Naive thymus-derived CD4-positive, alpha-beta T cell (primary cell): ENCODE measurements at regions of chr17 and their contacts with region 1.

Region 1: DNA sequence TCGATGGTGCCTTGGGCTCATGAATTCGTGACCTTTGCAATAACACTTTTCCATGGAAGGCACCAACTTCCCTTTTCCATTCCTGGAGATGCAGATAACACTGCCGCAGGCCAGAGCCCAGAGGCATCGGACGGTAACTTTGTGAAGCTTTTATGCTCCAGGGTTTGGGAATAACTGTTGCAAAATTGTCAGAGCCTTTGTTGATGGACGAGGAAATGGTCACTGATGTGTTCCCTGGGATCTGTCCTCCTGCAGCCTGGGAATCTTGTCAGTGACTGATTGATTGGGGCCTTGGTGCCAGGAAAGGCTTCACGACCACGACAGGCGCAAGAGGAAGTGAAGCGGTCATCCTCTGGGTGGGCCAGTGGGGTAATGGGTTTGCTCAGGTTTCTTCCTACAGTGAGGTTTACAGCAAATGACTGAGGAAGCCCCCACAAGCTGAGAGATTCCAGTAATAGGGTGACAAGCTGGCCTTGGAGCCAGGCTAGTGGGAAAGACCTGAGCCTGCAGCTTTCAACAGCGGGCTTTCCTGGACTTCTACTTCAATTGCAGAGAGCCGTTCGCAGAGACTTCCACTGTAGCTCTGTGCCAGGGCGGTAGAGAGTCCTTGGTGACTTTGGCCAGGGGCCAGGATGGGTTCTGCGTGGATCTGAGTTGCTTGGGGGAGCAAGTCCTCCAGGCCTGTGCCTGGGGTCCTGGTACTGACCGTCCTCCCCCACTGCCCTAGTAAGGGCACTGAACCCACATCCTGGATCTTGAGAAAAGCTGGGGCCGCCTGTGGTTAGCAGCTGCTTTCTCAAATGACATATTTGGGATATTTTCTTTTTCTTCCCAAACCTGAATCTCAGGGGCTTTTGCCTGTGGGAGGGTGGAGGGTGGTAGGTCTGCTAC is 37.6 kb downstream of the PGS1 start:
- DNase-seq: no peak
- ATAC-seq: no peak
- H3K4me3 ChIP-seq: no peak overlapping the region
- H3K4me3 Mint-ChIP-seq: peak overlapping the region in 4 of 10 donors; percentile 38 to 84 (median 75)
- H3K27ac ChIP-seq: peak overlapping the region; percentile 75
- H3K27ac Mint-ChIP-seq: peak overlapping the region; percentile 16 to 97 (median 91)
- H3K4me1 ChIP-seq: peaks cover 24 to 41% of the 10 kb centered on the region in 2 donors
- H3K4me1 Mint-ChIP-seq: peaks cover 49 to 83% (median 55%) of the 10 kb centered on the region in 7 donors
- H3K27me3 ChIP-seq: no peaks in the 10 kb centered on the region
- H3K27me3 Mint-ChIP-seq: no peaks in the 10 kb centered on the region

Region 2: DNA sequence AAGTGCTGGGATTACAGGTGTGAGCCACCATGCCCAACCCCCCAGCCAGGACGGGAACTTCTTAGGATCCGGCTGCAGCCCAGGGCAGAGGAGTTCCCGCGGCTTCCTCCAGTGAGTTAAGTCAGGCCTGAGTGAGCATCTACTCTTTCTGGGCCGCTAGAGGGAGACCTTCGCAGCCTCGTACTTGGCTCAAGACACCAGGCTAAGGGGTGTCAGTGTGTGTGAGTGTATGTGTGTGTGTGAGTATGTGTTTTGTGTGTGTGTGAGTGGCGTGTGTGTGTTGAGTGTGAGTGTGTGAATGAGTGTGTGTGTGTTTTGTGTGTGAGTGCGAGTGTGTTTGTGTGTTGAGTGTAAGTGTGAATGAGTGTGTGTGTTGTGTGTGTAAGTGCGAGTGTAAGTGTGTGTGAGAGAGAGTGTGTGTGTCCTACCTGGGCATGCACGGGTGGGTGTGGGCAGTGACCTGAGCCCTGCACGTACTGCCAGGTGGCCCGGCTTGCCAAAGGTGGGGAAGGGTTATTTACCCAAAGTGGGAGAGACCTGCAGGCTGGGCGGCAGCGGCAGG is 126.2 kb before region 1 on chr17:
- CTCF ChIA-PET with region 1: interaction called, 32 read pairs
- POLR2A ChIA-PET with region 1: no interaction called
- intact Hi-C with region 1: loop called in 1 of 2 experiments (anchors 2 kb)
- DNase-seq: peak; percentile 41 to 82 (median 71)
- ATAC-seq: peak; percentile 97
- H3K4me3 ChIP-seq: no peak overlapping the region
- H3K4me3 Mint-ChIP-seq: no peak overlapping the region
- H3K27ac ChIP-seq: no peak overlapping the region
- H3K27ac Mint-ChIP-seq: no peak overlapping the region
- H3K4me1 ChIP-seq: peaks cover 4 to 8% of the 10 kb centered on the region in 2 donors
- H3K4me1 Mint-ChIP-seq: peaks cover 0 to 10% (median 5%) of the 10 kb centered on the region in 7 donors
- H3K27me3 ChIP-seq: no peaks in the 10 kb centered on the region
- H3K27me3 Mint-ChIP-seq: no peaks in the 10 kb centered on the region

Region 3: DNA sequence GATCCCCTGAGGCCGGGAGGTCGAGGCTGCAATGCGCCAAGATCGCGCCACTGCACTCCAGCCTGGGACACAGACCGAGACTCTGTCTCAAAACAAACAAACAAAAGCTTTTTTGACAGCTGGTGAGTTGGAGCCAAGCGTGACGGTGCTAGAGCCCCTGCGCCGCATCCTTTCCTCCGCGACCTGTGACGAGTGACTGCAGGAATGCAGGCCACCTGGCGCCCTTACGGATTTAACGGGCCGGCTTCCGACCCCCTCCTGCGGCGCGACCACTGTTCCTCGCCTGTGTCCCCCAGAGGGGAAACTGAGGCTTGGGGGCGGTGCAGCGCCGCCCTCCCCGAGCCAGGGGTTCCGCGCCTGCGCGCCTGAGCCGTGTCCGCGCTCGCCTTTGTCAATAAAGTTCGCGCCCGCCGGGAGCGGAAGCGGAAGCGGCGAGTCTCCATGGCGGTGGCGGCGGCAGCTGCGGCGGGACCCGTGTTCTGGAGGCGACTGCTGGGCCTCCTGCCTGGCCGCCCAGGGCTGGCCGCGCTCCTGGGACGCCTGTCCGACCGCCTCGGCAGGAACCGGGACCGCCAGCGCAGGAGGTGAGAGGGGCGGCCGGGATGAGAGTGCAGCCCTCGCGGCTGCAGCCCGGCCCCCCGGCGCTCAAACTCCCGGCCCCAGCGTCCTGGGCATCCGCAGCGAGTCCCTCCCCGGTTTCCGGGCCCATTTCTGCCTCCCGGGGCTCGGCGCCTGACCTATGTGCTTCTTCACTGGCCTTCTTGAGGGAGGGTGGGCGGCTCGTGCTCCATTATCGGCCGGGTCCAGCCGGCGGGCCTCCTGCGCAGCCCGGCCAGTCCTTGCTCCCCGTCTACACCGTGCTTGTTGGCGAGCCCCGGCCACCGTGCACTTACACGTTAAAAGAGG is 37.6 kb before region 1 on chr17 and contains the start of gene PGS1:
- CTCF ChIA-PET with region 1: interaction called, 8 read pairs
- POLR2A ChIA-PET with region 1: no interaction called
- intact Hi-C with region 1: loop called in 1 of 2 experiments (anchors 2 kb)
- DNase-seq: peak; percentile 76 to 91 (median 87)
- ATAC-seq: peak; percentile 70
- H3K4me3 ChIP-seq: peak within 1 kb of the TSS; percentile 82
- H3K4me3 Mint-ChIP-seq: peak within 1 kb of the TSS; percentile 65 to 96 (median 93)
- H3K27ac ChIP-seq: peak within 1 kb of the TSS; percentile 73
- H3K27ac Mint-ChIP-seq: peak within 1 kb of the TSS; percentile 87 to 93 (median 91)
- H3K4me1 ChIP-seq: peaks cover 35 to 44% of the 10 kb centered on the region in 2 donors
- H3K4me1 Mint-ChIP-seq: peaks cover 38 to 51% (median 42%) of the 10 kb centered on the region in 7 donors
- H3K27me3 ChIP-seq: no peaks in the 10 kb centered on the region
- H3K27me3 Mint-ChIP-seq: no peaks in the 10 kb centered on the region
- total RNA-seq, gene PGS1: 66.6 to 84.3 (median 82.0) TPM

Region 4: DNA sequence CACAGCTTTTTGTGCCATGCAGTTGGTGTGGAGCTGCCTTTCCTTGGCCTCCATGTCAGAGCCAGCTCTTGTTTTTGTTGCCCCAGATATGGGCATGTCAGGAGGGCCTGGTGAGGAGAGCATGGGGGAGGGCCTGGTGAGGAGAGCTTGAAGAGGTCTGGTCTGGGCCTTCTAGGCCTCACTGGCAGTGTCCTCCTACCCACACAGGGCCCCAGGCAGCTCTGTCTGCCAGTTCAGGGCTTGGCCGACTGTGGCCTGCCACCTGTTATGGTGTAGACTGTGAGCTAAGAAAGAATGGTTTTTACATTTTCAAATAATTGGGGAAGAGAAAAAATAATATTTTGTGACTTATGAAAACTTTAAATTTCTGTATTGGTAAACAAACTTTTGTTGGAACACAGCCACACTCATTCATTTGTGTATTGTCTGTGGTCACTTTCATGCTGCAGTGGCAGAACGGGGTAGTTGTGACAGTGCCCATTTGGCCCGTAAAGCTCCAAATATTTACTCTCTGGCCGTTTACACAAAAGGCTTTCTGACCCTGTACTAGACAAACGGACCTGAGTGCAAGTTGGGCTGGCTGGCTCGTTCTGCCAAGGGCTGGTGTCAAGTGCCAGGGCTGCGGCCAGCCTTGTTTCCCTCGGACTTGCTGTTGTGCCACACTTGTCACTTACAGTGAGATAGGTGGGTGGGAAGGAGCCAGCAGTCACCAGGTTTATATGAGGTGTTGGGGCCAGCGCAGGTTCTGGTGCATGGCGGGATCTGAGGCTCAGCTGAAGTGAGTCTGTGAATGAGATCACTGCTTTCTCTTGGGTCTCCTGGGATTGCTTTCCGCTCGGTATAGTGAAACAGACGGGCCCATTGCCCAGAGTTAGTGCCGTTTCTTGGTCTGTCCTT is 19.4 kb before region 1 on chr17:
- CTCF ChIA-PET with region 1: interaction called, 3 read pairs
- POLR2A ChIA-PET with region 1: no interaction called
- intact Hi-C with region 1: loop called in 1 of 2 experiments (anchors 1 kb)
- DNase-seq: no peak
- ATAC-seq: no peak
- H3K4me3 ChIP-seq: no peak overlapping the region
- H3K4me3 Mint-ChIP-seq: no peak overlapping the region
- H3K27ac ChIP-seq: no peak overlapping the region
- H3K27ac Mint-ChIP-seq: peak overlapping the region in 1 of 9 donors; percentile 64
- H3K4me1 ChIP-seq: no peaks in the 10 kb centered on the region
- H3K4me1 Mint-ChIP-seq: peaks cover 12 to 25% (median 21%) of the 10 kb centered on the region in 7 donors
- H3K27me3 ChIP-seq: no peaks in the 10 kb centered on the region
- H3K27me3 Mint-ChIP-seq: no peaks in the 10 kb centered on the region

Region 5: GRCh38 chr17:78474614-78475146 is 58.6 kb after region 1 on chr17:
- CTCF ChIA-PET with region 1: no interaction called
- POLR2A ChIA-PET with region 1: no interaction called
- intact Hi-C with region 1: no loop called
- DNase-seq: no peak
- ATAC-seq: peak; percentile 76
- H3K4me3 ChIP-seq: no peak overlapping the region
- H3K4me3 Mint-ChIP-seq: no peak overlapping the region
- H3K27ac ChIP-seq: no peak overlapping the region
- H3K27ac Mint-ChIP-seq: peak overlapping the region in 2 of 9 donors; percentile 28 to 71
- H3K4me1 ChIP-seq: peaks cover 0 to 8% of the 10 kb centered on the region in 2 donors
- H3K4me1 Mint-ChIP-seq: peaks cover 0 to 6% (median 0%) of the 10 kb centered on the region in 7 donors
- H3K27me3 ChIP-seq: no peaks in the 10 kb centered on the region
- H3K27me3 Mint-ChIP-seq: peaks cover 0 to 5% (median 0%) of the 10 kb centered on the region in 5 donors